Sigmoid colon (tissue), 7 donors: ENCODE measurements at regions of chr1 and their contacts with region 1.

Region 1: GRCh38 chr1:150243003-150243402 is 7.1 kb upstream of the ANP32E start:
- DNase-seq: peak; percentile 78
- H3K4me3 ChIP-seq: no peak overlapping the region
- H3K27ac ChIP-seq: no peak overlapping the region
- H3K4me1 ChIP-seq: no peaks in the 10 kb centered on the region
- H3K27me3 ChIP-seq: no peaks in the 10 kb centered on the region
- CTCF ChIP-seq: no peak
- EP300 ChIP-seq: no peak
- POLR2A ChIP-seq: no peak

Region 2: DNA sequence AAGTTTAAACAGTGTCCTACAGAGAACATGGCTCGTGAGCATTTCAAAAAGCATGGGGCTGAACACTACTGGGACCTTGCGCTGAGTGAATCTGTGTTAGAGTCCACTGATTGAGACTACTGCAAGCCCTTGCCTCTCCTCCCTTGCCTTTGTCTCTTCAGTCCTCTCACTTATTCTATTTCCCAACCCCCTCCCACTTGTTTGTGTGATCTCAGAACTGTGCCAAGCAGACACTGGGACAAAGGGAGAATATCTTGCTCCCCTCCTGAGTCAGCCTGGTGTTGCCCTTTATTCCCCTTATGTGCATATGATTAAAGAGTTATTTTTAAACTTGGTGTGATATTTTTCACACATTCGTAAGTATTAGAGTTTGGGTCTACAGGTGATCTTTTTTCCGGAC is 109.9 kb after region 1 on chr1:
- intact Hi-C with region 1: no loop called
- DNase-seq: no peak
- H3K4me3 ChIP-seq: no peak overlapping the region
- H3K27ac ChIP-seq: no peak overlapping the region
- H3K4me1 ChIP-seq: no peaks in the 10 kb centered on the region
- H3K27me3 ChIP-seq: no peaks in the 10 kb centered on the region
- CTCF ChIP-seq: no peak
- EP300 ChIP-seq: no peak
- POLR2A ChIP-seq: no peak

Region 3: GRCh38 chr1:150537732-150538684 is 295.0 kb after region 1 on chr1:
- intact Hi-C with region 1: loop called (anchors 10 kb)
- DNase-seq: peak; percentile 76
- H3K4me3 ChIP-seq: no peak overlapping the region
- H3K27ac ChIP-seq: peak overlapping the region; percentile 32 to 83 (median 54)
- H3K4me1 ChIP-seq: peaks cover 0 to 28% (median 11%) of the 10 kb centered on the region in 4 donors
- H3K27me3 ChIP-seq: no peaks in the 10 kb centered on the region
- CTCF ChIP-seq: no peak
- EP300 ChIP-seq: no peak
- POLR2A ChIP-seq: no peak